PC-9 (cell line): ENCODE measurements at regions of chr1 and their contacts with region 1.

Region 1: GRCh38 chr1:34587761-34588160 is 167.1 kb upstream of the GJB5 start:
- DNase-seq: no peak
- H3K4me3 ChIP-seq: no peak overlapping the region
- H3K27ac ChIP-seq: no peak overlapping the region
- H3K4me1 ChIP-seq: no peaks in the 10 kb centered on the region
- H3K27me3 ChIP-seq: no peaks in the 10 kb centered on the region; the same call in 1 of the 2 replicates
- CTCF ChIP-seq: no peak

Region 2: GRCh38 chr1:34250342-34250741 is 337.4 kb before region 1 on chr1:
- CTCF ChIA-PET with region 1: interaction called, 11 read pairs
- POLR2A ChIA-PET with region 1: no interaction called
- intact Hi-C with region 1: no loop called
- DNase-seq: no peak
- H3K4me3 ChIP-seq: no peak overlapping the region
- H3K27ac ChIP-seq: no peak overlapping the region
- H3K4me1 ChIP-seq: no peaks in the 10 kb centered on the region
- H3K27me3 ChIP-seq: peaks cover 18% of the 10 kb centered on the region; the same call in 1 of the 2 replicates
- CTCF ChIP-seq: no peak

Region 3: DNA sequence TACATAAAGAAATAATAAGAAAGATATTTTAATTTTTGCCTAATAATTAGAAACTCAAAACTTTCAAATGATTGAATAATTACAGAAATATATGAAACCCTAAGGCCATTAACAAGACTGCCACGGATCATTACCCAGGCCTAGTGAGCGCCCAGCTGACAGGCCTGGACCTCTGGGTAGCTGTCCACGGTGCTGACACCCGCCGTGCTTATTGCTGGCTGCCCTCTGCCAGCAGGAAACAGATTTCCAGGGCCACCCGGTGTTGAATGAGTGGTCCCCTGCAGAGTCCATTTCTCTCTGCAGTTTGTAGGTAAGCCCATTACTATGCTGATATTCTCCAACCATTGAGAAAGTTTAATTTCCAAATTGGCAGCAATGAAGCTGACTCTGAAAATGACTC is 87.3 kb before region 1 on chr1:
- CTCF ChIA-PET with region 1: no interaction called
- POLR2A ChIA-PET with region 1: no interaction called
- intact Hi-C with region 1: no loop called
- DNase-seq: peak in 1 of 2 experiments; percentile 8
- H3K4me3 ChIP-seq: no peak overlapping the region
- H3K27ac ChIP-seq: no peak overlapping the region
- H3K4me1 ChIP-seq: no peaks in the 10 kb centered on the region
- H3K27me3 ChIP-seq: peaks cover 24% of the 10 kb centered on the region; the same call in 1 of the 2 replicates
- CTCF ChIP-seq: no peak